AG04449 (cell line): ENCODE measurements at regions of chr2 and their contacts with region 1.

Region 1: GRCh38 chr2:231482806-231483391 is 18.6 kb upstream of the NCL start:
- DNase-seq: no peak
- H3K4me3 ChIP-seq: peak overlapping the region; percentile 41
- CTCF ChIP-seq: peak; percentile 95

Region 2: DNA sequence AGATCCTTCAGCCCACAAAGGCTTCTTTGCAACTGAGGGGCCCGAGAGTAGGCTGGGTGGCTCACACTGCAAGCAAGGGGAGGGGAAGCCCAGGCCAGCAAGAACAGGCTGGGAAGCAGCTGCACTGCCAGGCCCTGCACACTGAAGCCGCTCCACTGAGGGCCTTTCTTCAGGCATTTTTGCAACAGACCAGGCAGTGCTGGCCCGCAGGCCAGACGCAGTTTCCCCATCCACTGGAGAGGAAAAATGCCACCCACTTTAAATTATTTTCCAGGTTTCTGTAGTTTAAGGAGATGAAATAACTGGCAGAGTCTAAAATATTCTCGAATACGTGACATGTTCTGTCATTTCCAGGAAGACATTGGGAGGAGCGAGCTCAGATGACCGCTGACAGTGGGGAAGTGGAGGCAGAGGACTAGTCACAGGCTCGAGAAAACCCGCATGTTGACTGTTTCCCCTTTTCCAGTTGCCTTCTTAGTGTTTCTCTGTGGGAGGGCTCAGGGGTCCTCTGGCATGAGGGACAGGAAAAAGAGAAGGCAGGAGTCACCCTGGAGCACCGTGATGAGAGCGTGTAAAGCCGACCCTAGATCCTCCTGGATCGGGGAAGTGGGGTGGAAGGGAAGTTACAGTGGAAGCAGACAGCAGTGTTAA is 140.7 kb before region 1 on chr2:
- CTCF ChIA-PET with region 1: no interaction called
- POLR2A ChIA-PET with region 1: no interaction called
- DNase-seq: no peak
- H3K4me3 ChIP-seq: no peak overlapping the region
- CTCF ChIP-seq: no peak

Region 3: GRCh38 chr2:231463698-231464575 is 19.0 kb before region 1 on chr2 and contains the start of gene NCL:
- CTCF ChIA-PET with region 1: interaction called, 97 read pairs
- POLR2A ChIA-PET with region 1: interaction called, 22 read pairs
- DNase-seq: peak; percentile 82
- H3K4me3 ChIP-seq: peak within 1 kb of the TSS; percentile 97
- CTCF ChIP-seq: no peak

Region 4: DNA sequence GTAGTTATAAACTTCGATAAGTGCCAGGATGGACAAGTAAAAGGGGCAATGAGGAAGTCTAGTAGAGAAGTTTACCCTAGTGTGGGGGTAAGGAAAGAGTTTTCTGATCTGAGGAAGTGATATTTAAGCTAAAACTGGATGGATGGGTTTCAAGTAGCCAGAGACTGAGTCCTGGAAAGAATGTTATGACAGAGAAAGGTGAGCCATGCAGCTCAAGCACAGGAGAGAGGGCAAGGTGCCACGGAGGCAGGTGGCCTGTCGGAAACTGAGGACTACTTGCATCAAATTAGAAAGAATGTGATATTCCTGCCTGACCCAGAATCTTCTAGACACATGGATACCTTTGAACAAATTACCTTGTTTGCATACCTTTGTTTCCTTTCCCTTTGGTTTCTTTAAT is 20.9 kb after region 1 on chr2:
- CTCF ChIA-PET with region 1: interaction called, 23 read pairs
- POLR2A ChIA-PET with region 1: no interaction called
- DNase-seq: no peak
- H3K4me3 ChIP-seq: no peak overlapping the region
- CTCF ChIP-seq: no peak

Region 5: DNA sequence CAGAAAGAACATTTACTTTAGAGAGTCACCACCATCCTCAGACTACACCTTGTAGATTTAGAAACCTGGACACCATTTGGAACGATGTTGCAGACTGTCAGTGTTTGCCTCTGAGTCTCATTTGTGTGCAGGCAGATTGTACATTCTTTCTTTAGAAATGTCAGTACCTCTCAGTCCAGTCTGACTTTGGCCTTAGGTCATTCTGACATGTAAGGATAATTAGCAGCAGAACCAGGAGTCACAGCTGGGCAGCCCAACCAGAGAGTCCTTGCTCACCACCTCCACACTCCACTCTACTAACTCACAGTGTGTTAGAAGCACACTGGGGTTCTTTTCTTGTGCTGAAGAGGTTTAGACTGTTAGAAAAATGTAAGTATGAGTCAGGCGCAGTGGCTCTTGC is 36.5 kb after region 1 on chr2:
- CTCF ChIA-PET with region 1: interaction called, 15 read pairs
- POLR2A ChIA-PET with region 1: no interaction called
- DNase-seq: no peak
- H3K4me3 ChIP-seq: no peak overlapping the region
- CTCF ChIP-seq: no peak

Region 6: DNA sequence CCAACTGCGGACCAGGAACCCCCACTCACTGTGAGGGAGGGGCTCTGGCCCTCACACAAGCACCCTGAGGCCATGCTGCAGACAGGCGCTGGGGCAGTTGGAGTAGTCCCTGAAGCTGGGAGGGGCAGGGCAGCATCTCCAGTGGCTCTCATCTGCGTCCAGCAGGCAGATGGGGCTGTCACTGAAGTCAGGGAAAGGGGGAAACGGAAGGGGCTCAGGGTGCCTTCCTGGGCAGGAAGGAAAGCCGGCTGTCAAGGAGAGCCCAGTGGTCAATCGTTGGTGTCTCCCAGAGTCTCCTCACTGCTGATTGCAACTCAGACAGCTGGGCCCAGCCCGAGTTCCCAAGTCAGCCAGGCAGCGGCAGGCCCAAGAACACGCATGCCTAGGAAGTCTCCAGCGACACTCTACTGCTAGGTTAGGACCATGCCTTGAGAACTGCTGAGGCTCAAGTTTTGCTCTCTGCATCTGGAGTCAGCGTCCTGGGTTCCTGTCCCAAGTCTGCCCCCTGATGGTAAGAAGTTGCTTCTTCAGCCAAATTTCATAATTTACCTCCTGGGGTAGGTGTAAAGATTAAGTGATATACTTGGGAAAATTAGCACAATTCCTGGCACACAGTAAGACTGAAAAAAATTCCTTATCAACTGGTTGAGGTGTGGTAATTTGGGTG is 74.8 kb after region 1 on chr2:
- CTCF ChIA-PET with region 1: interaction called, 127 read pairs
- POLR2A ChIA-PET with region 1: no interaction called
- DNase-seq: peak; percentile 23
- H3K4me3 ChIP-seq: no peak overlapping the region
- CTCF ChIP-seq: peak; percentile 66

Region 7: DNA sequence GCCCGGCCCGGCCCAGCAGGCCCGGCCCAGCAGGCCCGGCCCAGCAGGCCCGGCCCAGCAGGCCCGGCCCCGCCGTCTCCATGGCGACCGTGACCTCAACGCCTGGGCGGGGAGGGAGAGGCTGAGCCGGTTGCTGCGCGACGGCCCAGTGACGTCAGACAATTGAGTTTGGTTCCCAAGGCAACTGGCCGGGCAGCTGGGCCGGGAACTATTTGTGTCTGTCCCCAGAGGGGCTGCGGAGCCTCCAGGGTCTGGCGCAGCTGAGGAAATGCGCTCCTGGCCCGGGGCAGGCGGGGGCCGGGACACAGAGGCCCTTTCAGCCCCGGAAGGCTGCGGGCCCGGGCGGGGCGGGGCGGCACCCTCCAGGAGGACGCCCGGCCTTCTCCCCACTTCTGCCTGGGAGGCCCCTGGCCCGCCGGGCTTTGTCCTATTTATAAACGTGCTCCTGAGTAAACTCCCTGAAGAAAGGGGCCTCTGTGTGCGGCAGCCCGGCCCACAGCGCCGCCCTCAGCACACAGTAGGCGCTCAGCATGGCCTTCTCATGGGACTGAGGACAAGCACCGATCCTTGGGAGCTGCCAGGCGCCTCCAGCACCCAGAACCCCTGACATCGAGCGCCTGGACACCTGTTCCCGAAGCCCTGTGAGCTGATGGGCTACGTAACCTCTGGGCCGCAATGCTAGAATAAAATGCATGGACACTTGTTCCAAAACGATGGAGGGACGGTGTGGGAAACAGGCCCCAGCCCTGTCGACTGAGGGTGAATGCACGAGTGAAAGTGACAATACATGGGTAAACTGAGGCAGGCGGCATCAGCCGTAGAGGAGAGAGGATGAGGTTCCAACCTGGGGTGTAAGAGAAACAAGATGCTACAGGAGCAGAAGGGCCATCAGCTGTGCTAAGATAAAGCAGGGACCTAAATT is 122.0 kb after region 1 on chr2:
- CTCF ChIA-PET with region 1: interaction called, 23 read pairs
- POLR2A ChIA-PET with region 1: no interaction called
- DNase-seq: peak; percentile 65
- H3K4me3 ChIP-seq: peak overlapping the region; percentile 56
- CTCF ChIP-seq: no peak